ENCODE measurements at regions of chr7 and their contacts with region 1.

Region 1: GRCh38 chr7:148940702-148941597 is 56.9 kb upstream of the EZH2 start:
- DNase-seq: peak; percentile 87
- H3K4me3 ChIP-seq: peak overlapping the region; percentile 82
- H3K27ac ChIP-seq: peak overlapping the region; percentile 51
- H3K4me1 ChIP-seq: peaks cover 13% of the 10 kb centered on the region
- CTCF ChIP-seq: no peak

Region 2: DNA sequence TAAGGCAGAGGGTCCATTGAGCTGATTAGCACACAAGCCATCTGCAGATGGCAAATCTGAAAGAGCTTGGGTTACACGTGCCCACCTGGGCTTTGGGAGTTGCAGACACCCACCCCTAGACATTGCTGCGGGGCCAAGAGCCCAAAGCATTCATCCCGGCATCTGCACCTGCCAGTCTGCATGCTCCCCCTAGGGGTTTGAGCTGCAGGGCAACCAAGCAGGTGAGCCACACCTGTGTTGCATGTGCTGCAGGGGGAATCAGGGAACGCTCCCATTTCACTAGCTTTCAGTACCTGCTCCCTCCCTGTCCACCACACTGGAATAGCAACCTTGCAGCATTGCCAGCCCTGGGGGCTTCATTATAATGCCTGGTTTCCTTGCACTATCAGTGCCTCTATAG is 329.3 kb before region 1 on chr7:
- CTCF ChIA-PET with region 1: no interaction called
- POLR2A ChIA-PET with region 1: no interaction called
- intact Hi-C with region 1: no loop called
- DNase-seq: no peak
- H3K4me3 ChIP-seq: no peak overlapping the region
- H3K27ac ChIP-seq: no peak overlapping the region
- H3K4me1 ChIP-seq: no peaks in the 10 kb centered on the region
- CTCF ChIP-seq: no peak

Region 3: DNA sequence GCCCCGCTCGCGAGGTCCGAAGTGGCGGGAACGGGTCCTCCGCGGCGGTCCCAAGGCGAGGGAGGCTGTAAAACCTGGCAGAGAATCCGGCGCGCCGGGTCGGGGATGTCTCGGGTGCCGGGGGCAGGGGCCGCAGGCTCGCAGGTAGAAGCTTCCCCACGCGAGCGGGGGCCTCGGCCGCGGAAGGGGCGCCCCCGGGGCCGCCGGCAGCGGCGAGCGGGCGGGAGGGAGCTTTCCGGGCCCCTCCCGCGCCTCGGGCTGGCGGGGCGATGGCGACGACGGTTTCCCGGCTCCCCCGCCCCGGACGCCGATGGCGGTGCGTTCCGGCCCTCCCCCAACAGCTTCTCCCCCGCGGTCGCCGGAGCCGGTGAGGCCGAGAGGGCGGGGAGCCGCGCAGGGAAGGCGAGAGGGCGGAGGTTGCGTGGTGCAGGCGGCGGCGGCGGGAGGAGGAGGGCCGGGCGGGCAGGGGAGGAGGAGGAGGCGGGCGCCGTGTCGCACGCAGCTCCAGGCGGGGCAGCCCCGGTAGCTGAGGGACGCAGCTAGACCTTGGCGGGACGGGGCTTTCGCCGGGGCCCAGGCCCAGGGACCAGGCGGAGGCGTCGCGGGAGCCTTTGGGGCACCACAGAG is 242.4 kb before region 1 on chr7 and contains the start of gene CUL1:
- CTCF ChIA-PET with region 1: no interaction called
- POLR2A ChIA-PET with region 1: interaction called, 7 read pairs
- intact Hi-C with region 1: loop called (anchors 2 kb)
- DNase-seq: peak; percentile 84
- H3K4me3 ChIP-seq: peak within 1 kb of the TSS; percentile 83
- H3K27ac ChIP-seq: peak within 1 kb of the TSS; percentile 69
- H3K4me1 ChIP-seq: peaks cover 32% of the 10 kb centered on the region
- CTCF ChIP-seq: no peak
- total RNA-seq, gene CUL1: 36.7 and 40.5 TPM in 2 replicates

Region 4: GRCh38 chr7:148884299-148885022 is 56.5 kb before region 1 on chr7:
- CTCF ChIA-PET with region 1: no interaction called
- POLR2A ChIA-PET with region 1: interaction called, 7 read pairs
- intact Hi-C with region 1: loop called (anchors 1 kb)
- DNase-seq: peak; percentile 96
- H3K4me3 ChIP-seq: peak overlapping the region; percentile 91
- H3K27ac ChIP-seq: peak overlapping the region; percentile 88
- H3K4me1 ChIP-seq: peaks cover 25% of the 10 kb centered on the region
- CTCF ChIP-seq: no peak

Region 5: DNA sequence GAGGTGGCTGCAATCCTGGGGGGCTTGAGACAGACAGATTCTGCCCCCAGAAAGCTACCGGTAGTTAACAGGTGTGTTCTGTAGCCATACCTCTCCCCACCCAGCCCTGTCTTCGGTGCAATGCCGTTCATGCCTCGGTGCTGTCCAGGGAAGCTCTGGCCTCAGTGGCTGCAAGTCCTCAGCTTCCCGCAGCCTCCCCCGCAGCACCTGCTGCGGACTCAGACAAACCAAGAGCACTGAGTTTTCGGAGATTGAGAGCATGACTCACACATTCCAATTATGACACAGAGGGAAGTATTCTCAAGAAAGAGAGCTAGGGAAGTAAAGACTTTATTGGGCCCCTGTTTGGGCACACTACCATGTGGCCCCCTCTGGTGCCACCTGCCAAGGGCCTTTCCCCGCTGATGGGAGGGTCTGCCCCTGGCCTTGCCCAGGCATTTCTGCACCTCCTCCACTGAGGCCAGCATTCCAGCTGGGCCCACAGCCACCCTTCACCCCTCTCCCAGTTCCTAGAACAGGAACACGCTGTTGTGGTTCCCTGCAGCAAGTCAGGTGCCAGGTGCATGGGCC is 26.7 kb before region 1 on chr7:
- CTCF ChIA-PET with region 1: interaction called, 3 read pairs
- POLR2A ChIA-PET with region 1: interaction called, 11 read pairs
- intact Hi-C with region 1: no loop called
- DNase-seq: no peak
- H3K4me3 ChIP-seq: no peak overlapping the region
- H3K27ac ChIP-seq: no peak overlapping the region
- H3K4me1 ChIP-seq: peaks cover 33% of the 10 kb centered on the region
- CTCF ChIP-seq: no peak

Region 6: DNA sequence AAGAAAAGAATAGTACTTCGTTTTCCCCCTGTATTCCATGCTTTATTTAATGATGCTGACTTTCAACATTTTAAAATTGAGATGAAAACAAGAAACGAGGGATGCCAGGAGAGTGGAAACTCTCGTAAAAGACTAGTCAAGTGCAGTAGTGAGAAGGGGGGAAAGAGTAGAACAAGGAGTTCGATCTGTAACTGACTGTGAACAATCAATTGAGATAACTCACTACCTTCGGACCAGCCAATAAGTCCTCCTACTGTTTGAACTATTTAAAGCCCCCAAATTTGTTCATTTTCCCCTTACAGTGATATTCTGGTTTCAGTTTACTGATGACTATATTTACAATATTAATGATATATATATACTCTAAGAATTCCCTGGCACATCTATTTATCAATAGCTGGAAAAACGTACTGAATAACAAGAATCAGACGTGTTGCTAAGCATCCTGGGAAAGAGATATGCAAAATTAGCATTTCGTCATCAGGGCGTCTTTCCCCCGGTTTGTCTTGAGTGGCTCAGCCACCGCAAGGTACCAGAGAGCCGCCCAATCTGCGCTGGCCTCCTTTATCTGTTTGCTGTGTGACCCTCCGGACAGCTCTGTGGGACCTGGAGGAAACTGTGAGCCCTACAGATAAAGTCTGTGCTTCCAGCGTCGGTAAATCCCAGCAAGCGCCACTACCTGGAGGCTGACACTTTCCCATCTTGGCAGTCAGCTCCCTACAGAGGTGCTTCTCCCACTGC is 46.2 kb after region 1 on chr7:
- CTCF ChIA-PET with region 1: interaction called, 3 read pairs
- POLR2A ChIA-PET with region 1: interaction called, 7 read pairs
- intact Hi-C with region 1: loop called (anchors 1 kb)
- DNase-seq: peak; percentile 94
- H3K4me3 ChIP-seq: peak overlapping the region; percentile 87
- H3K27ac ChIP-seq: peak overlapping the region; percentile 46
- H3K4me1 ChIP-seq: peaks cover 22% of the 10 kb centered on the region
- CTCF ChIP-seq: no peak

Measured in OCI-LY7 (cell line).